Transverse colon (tissue), 4 donors: ENCODE measurements at regions of chr5 and their contacts with region 1.

Region 1: DNA sequence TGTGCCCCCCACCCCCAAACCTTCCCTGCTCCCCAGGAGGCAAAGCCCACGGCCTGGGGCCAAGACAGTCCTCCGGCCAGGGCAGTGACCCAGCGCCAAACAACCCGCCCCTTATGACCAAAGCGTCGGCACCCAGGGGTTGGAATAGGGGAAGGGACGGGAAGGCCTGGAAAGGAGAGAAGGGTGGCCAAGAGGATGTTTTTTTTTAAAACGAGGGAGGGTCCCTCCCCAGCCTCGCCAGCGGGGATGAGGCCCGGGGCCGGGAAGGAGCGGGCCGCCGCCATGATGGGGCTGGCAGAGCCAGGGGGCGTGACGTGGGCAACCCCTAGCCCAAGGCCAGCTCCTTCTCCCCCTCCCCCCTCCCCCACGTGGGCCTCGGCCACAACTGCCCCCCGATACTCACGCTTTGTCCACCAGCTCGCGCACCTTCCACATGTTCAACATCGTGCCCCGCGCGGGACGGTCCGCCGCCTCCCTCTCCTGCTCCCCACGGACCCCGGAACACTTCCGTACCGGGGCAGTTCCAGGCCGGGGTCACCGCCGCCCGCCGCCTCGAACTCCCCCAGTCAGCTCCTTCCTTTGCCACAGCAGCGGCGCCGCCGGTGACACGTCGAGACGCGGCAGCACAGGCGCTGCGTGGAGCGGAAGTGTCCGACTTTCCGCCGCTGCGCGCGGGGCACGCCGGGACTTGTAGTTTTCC is at the start of gene CLINT1:
- DNase-seq: peak; percentile 94
- H3K4me3 ChIP-seq: peak within 1 kb of the TSS; percentile 80 to 93 (median 87)
- H3K27ac ChIP-seq: peak within 1 kb of the TSS; percentile 88 to 94 (median 91)
- H3K4me1 ChIP-seq: peaks cover 13 to 52% (median 26%) of the 10 kb centered on the region in 4 donors
- H3K27me3 ChIP-seq: no peaks in the 10 kb centered on the region
- CTCF ChIP-seq: peak in 1 of 5 experiments; percentile 13
- EP300 ChIP-seq: no peak
- POLR2A ChIP-seq: peak; percentile 82
- total RNA-seq, gene CLINT1: 75.6 to 174 (median 131) TPM

Region 2: GRCh38 chr5:157994906-157995519 is 136.3 kb after region 1 on chr5:
- in situ Hi-C with region 1: no loop called
- intact Hi-C with region 1: loop called (anchors 10 kb)
- DNase-seq: peak; percentile 77
- H3K4me3 ChIP-seq: no peak overlapping the region
- H3K27ac ChIP-seq: no peak overlapping the region
- H3K4me1 ChIP-seq: peaks cover 0 to 6% (median 5%) of the 10 kb centered on the region in 4 donors
- H3K27me3 ChIP-seq: no peaks in the 10 kb centered on the region
- CTCF ChIP-seq: peak; percentile 70 to 74 (median 72)
- EP300 ChIP-seq: no peak
- POLR2A ChIP-seq: no peak